Breast epithelium (tissue), 4 donors: ENCODE measurements at regions of chr16 and their contacts with region 1.

Region 1: DNA sequence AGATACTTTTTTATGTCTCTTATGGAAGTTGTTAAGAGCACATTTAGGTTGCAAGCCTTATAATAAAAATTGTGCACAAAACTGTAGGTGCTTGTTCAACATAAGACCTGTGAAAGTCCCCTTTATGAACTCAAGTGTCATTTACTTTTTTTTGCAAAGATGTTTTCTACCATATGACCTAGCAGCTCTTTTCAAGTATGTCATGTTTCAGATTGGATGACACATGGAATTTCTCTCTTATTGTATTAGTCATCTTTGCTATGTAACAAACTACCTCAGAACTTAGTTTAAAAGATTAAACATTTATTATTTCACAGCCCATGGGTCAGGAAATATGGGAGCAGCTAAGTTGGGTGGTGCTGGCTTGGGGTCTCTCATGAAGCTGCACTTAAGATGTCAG is 57.9 kb downstream of the PHKB start:
- DNase-seq: no peak
- H3K4me3 ChIP-seq: no peak overlapping the region
- H3K27ac ChIP-seq: no peak overlapping the region
- H3K4me1 ChIP-seq: no peaks in the 10 kb centered on the region
- H3K27me3 ChIP-seq: no peaks in the 10 kb centered on the region
- CTCF ChIP-seq: no peak
- POLR2A ChIP-seq: no peak

Region 2: GRCh38 chr16:47408491-47408890 is 110.5 kb before region 1 on chr16:
- intact Hi-C with region 1: loop called (anchors 5 kb)
- DNase-seq: no peak
- H3K4me3 ChIP-seq: no peak overlapping the region
- H3K27ac ChIP-seq: no peak overlapping the region
- H3K4me1 ChIP-seq: no peaks in the 10 kb centered on the region
- H3K27me3 ChIP-seq: no peaks in the 10 kb centered on the region
- CTCF ChIP-seq: no peak
- POLR2A ChIP-seq: no peak

Region 3: DNA sequence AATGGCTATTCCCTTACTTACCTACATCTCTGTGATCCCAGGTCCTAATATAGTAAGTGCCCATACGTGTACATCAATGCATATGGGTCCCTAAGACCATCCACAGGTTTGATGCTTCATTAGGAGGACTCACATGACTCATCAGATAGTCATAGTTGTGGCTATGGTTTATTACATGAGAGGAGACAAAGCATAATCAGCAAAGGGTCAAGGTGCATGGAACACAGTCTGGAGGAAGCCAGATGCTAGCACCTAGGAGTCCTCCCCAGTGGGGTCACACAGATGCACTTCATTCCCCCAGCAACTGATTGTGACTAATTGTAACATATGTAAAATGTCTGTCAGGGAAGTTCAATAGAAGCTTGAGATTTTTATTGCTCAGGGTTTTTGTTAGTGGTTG is 15.1 kb before region 1 on chr16:
- intact Hi-C with region 1: loop called (anchors 1 kb)
- DNase-seq: no peak
- H3K4me3 ChIP-seq: no peak overlapping the region
- H3K27ac ChIP-seq: no peak overlapping the region
- H3K4me1 ChIP-seq: no peaks in the 10 kb centered on the region
- H3K27me3 ChIP-seq: no peaks in the 10 kb centered on the region
- CTCF ChIP-seq: no peak
- POLR2A ChIP-seq: no peak